AG04450 (cell line): ENCODE measurements at regions of chr1 and their contacts with region 1.

Region 1: DNA sequence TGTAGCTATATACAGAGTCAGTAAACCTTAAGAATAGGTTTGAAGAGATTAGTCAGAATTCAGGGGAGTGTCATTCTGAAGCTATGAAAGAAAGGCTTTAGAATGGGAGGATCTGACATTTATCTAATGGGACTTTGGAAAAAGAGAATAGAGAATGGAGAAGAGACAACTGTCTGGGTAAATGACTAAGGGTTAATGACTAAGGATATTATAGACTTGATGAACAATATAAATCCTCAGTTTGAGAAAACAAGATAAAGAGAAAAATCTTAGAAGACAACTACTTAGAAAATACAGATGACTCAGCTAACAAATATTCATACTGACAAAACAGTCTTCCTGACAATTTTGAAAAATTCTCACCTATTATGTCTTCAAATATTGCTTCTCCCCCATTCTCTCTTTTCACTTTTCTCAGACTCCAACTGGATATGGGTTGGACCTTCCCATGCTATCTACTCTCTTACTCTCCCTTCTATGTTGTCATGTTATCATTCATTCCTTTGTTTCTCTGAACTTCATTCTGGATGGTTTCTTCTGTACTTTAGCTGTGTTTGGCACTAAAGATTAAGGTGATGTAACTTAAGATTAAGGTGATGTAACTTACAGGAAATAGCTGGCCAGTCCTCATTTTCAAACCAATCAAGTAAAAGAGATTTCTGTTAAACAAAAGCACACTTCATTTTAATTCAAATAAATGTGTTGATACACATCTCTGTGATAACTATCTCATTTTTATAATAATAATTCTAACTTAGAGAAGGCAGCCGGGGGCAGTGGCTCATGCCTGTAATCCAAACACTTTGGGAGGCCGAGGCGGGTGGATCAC is 20.3 kb downstream of the SLC16A1 start:
- DNase-seq: no peak
- H3K4me3 ChIP-seq: no peak overlapping the region
- H3K27ac ChIP-seq: peak overlapping the region; percentile 47
- H3K27me3 ChIP-seq: no peaks in the 10 kb centered on the region
- CTCF ChIP-seq: no peak

Region 2: DNA sequence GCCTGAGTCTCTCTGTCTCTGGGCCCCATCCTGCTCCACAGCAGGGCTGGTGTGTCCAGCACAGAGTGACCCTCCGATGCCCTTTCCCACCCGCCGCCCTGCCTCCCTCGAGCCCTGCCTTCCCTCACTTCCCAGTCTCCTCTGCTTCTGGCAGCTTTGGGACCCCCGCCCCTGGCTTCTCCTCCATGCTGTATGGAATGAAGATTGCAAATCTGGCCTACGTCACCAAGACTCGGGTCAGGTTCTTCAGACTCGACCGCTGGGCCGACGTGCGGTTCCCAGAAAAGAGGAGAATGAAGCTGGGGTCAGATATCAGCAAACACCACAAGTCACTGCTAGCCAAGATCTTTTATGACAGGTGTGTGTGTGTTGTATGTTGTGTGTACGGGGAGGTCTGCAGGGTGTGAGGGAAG is 246.9 kb before region 1 on chr1:
- CTCF ChIA-PET with region 1: no interaction called
- POLR2A ChIA-PET with region 1: no interaction called
- DNase-seq: no peak
- H3K4me3 ChIP-seq: no peak overlapping the region
- H3K27ac ChIP-seq: no peak overlapping the region
- H3K27me3 ChIP-seq: no peaks in the 10 kb centered on the region
- CTCF ChIP-seq: no peak

Region 3: GRCh38 chr1:112904071-112904830 is 31.4 kb before region 1 on chr1:
- CTCF ChIA-PET with region 1: no interaction called
- POLR2A ChIA-PET with region 1: interaction called, 11 read pairs
- DNase-seq: peak; percentile 58
- H3K4me3 ChIP-seq: no peak overlapping the region
- H3K27ac ChIP-seq: no peak overlapping the region
- H3K27me3 ChIP-seq: no peaks in the 10 kb centered on the region
- CTCF ChIP-seq: no peak

Region 4: GRCh38 chr1:112923956-112924349 is 11.7 kb before region 1 on chr1:
- CTCF ChIA-PET with region 1: interaction called, 3 read pairs
- POLR2A ChIA-PET with region 1: interaction called, 20 read pairs
- DNase-seq: no peak
- H3K4me3 ChIP-seq: no peak overlapping the region
- H3K27ac ChIP-seq: no peak overlapping the region
- H3K27me3 ChIP-seq: no peaks in the 10 kb centered on the region
- CTCF ChIP-seq: no peak

Region 5: GRCh38 chr1:112955781-112956543 is 20.3 kb after region 1 on chr1 and contains the start of gene SLC16A1:
- CTCF ChIA-PET with region 1: interaction called, 7 read pairs
- POLR2A ChIA-PET with region 1: interaction called, 15 read pairs
- DNase-seq: peak; percentile 87
- H3K4me3 ChIP-seq: peak within 1 kb of the TSS; percentile 95
- H3K27ac ChIP-seq: peak within 1 kb of the TSS; percentile 91
- H3K27me3 ChIP-seq: no peaks in the 10 kb centered on the region
- CTCF ChIP-seq: peak; percentile 40
- polyA plus RNA-seq, gene SLC16A1: 62.1 and 78.7 TPM in 2 replicates